ENCODE measurements at regions of chr6 and their contacts with region 1.

Region 1: GRCh38 chr6:87772597-87773530 is 70.8 kb upstream of the AKIRIN2 start:
- DNase-seq: peak; percentile 94
- ATAC-seq: peak; percentile 93
- H3K4me3 ChIP-seq: peak overlapping the region in 2 of 3 experiments; percentile 11 to 15; a peak in 2 of 6 replicates
- H3K27ac ChIP-seq: peak overlapping the region; percentile 77
- H3K4me1 ChIP-seq: peaks cover 66% of the 10 kb centered on the region
- H3K27me3 ChIP-seq: no peaks in the 10 kb centered on the region
- CTCF ChIP-seq: no peak
- EP300 ChIP-seq: peak in 1 of 2 experiments; percentile 60; a peak in 1 of 4 replicates
- POLR2A ChIP-seq: 0 out of 4 replicates have a peak, but pooled peaks of 1 of the 2 experiments have one; percentile 20
- RAD21 ChIP-seq: no peak

Region 2: GRCh38 chr6:87731818-87732661 is 40.8 kb before region 1 on chr6:
- CTCF ChIA-PET with region 1: no interaction called
- POLR2A ChIA-PET with region 1: interaction called, 3 read pairs
- in situ Hi-C with region 1: no loop called
- intact Hi-C with region 1: loop called (anchors 5 kb)
- DNase-seq: peak; percentile 86
- ATAC-seq: peak; percentile 76
- H3K4me3 ChIP-seq: no peak overlapping the region
- H3K27ac ChIP-seq: peak overlapping the region; percentile 19
- H3K4me1 ChIP-seq: peaks cover 51% of the 10 kb centered on the region
- H3K27me3 ChIP-seq: no peaks in the 10 kb centered on the region
- CTCF ChIP-seq: no peak
- EP300 ChIP-seq: peak in 1 of 2 experiments; percentile 71; a peak in 2 of 4 replicates
- POLR2A ChIP-seq: no peak
- RAD21 ChIP-seq: no peak

Region 3: GRCh38 chr6:87789198-87789899 is 16.5 kb after region 1 on chr6:
- CTCF ChIA-PET with region 1: no interaction called
- POLR2A ChIA-PET with region 1: interaction called, 25 read pairs
- in situ Hi-C with region 1: no loop called
- intact Hi-C with region 1: no loop called
- DNase-seq: peak; percentile 93
- ATAC-seq: peak; percentile 91
- H3K4me3 ChIP-seq: peak overlapping the region in 1 of 3 experiments; percentile 42; a peak in 3 of 6 replicates
- H3K27ac ChIP-seq: peak overlapping the region; percentile 68
- H3K4me1 ChIP-seq: peaks cover 83% of the 10 kb centered on the region
- H3K27me3 ChIP-seq: no peaks in the 10 kb centered on the region
- CTCF ChIP-seq: no peak
- EP300 ChIP-seq: peak in 1 of 2 experiments; percentile 89; a peak in 2 of 4 replicates
- POLR2A ChIP-seq: no peak
- RAD21 ChIP-seq: no peak

Region 4: DNA sequence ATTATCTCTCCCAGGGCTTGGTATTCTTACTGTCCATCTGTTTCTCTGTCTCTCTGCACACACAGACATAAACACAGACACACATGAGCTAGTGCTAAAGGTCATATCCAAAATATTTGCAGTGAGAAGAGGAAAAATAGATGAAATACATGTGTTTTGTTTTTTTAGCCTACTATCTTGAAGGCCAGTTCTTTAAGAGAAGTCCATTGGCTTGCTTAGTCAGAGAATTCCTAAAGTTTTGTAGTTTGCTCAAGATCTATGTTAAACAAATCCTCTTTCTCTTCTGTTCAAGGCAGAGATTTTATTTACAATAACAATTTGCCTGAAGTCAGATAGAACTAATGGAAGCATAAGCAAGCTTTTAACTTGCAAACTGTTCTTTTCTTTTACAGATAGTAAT is 49.1 kb after region 1 on chr6:
- CTCF ChIA-PET with region 1: no interaction called
- POLR2A ChIA-PET with region 1: interaction called, 12 read pairs
- in situ Hi-C with region 1: no loop called
- intact Hi-C with region 1: no loop called
- DNase-seq: peak; percentile 92
- ATAC-seq: peak; percentile 92
- H3K4me3 ChIP-seq: no peak overlapping the region; a peak in 1 of 6 replicates
- H3K27ac ChIP-seq: no peak overlapping the region
- H3K4me1 ChIP-seq: peaks cover 91% of the 10 kb centered on the region
- H3K27me3 ChIP-seq: no peaks in the 10 kb centered on the region
- CTCF ChIP-seq: no peak
- EP300 ChIP-seq: peak in 1 of 2 experiments; percentile 80; a peak in 2 of 4 replicates
- POLR2A ChIP-seq: no peak
- RAD21 ChIP-seq: no peak

Measured in HepG2 (cell line).